ENCODE measurements at regions of chr4 and their contacts with region 1.

Region 1: DNA sequence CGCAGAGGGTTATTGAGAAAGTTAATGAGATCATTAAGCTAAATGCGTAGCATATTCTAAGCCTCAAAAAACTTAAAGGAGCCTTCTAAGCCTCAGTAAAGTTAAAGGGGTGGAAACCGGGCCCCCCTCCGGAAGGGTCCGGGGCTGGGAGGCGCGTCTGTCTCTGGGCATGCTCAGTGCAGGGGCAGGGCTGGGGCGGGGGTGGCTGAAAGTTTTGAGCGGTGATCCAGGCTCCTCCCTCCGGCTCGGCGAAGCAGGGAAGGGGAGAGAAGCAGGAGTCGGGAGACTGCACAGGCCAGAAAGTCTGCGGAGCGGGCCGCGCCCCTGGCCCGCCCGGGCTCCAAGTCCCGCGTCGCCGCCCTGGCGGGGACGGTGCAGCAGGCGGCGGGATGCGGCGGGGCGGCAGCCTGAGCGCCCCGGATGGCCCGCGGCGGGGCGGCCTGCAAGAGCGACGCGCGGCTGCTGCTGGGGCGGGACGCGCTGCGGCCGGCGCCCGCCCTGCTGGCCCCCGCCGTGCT is at the start of gene EVC:
- DNase-seq: peak; percentile 92 to 95
- ATAC-seq: peak; percentile 87
- H3K4me3 ChIP-seq: peak within 1 kb of the TSS; percentile 63 to 88
- H3K27ac ChIP-seq: peak within 1 kb of the TSS; percentile 63 to 82
- H3K4me1 ChIP-seq: peaks cover 4 to 6% of the 10 kb centered on the region in 2 donors
- H3K27me3 ChIP-seq: no peaks in the 10 kb centered on the region
- total RNA-seq, gene EVC: 33.3 to 58.2 TPM

Region 2: GRCh38 chr4:5101571-5101970 is 609.4 kb before region 1 on chr4:
- intact Hi-C with region 1: no loop called
- DNase-seq: no peak
- ATAC-seq: no peak
- H3K4me3 ChIP-seq: no peak overlapping the region
- H3K27ac ChIP-seq: no peak overlapping the region
- H3K4me1 ChIP-seq: no peaks in the 10 kb centered on the region
- H3K27me3 ChIP-seq: no peaks in the 10 kb centered on the region

Region 3: DNA sequence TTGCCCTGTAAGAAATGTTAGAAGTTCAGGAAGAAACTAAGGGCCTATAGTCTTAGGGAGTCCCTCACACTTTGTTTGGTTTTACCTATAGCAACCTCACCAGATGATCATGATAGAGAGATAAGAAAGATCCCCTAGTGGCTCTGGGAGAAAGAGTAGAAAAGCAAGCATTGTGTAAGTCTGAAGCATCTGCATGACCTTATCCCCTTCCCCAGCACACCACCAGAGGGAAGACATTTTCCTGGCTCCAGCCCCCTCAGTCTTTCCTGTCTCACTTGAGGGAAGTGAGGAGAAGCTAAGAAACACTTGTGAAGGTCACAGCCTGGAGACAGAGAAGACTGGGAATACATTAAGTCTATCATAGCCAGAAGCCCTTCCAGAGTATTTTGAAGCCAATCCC is 156.6 kb before region 1 on chr4:
- intact Hi-C with region 1: no loop called
- DNase-seq: no peak
- ATAC-seq: no peak
- H3K4me3 ChIP-seq: no peak overlapping the region
- H3K27ac ChIP-seq: no peak overlapping the region
- H3K4me1 ChIP-seq: no peaks in the 10 kb centered on the region
- H3K27me3 ChIP-seq: no peaks in the 10 kb centered on the region

Region 4: DNA sequence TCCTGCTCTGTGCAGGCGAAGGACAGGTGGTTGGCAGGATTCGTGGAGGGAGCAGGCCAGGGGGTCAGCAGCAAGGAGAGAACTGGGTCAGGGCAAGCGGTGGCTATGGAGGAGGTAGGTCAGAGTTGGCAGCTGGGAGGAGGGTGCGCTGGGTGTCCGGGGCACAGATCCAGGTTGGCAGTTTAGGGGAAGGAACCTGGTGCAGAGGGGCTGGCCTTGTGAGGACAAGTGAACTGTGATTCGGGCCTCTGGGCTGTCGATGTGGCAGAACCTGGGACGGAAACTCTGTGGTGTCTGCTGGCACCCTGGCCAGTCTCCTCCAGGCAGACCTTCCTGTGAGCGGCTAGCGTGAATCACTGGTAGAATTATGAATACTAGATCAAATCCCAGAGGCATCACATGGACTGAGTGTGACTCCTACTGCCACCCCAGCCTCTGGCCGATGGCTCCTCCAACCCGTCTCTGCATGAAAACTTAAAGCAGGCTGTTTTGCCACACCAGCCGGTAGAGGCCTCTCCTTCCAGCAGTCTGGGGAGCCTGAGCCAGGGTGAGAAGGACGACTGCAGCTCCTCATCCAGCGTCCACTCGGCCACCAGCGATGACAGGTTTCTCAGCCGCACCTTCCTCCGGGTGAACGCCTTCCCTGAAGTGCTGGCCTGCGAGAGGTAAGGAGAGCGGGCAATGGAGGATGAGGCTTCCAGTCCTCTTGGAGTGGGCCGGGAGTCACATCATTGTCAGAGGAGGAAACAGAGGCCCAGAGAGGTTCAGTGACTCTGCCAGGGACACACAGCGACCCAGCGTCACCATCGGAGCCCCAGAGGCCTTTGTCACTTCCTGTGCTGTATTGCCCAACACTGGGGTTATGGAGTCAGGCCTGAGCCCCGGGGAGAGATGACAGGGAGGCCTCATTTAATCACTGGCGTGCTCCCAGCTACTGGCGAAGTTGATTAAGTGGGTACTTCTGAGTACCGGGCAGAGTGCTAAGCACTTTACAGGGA is 20.3 kb after region 1 on chr4:
- intact Hi-C with region 1: loop called in 1 of 2 experiments (anchors 1 kb)
- DNase-seq: peak; percentile 75 to 85
- ATAC-seq: peak; percentile 49
- H3K4me3 ChIP-seq: no peak overlapping the region
- H3K27ac ChIP-seq: peak overlapping the region; percentile 54 to 85
- H3K4me1 ChIP-seq: peaks cover 2 to 7% of the 10 kb centered on the region in 2 donors
- H3K27me3 ChIP-seq: no peaks in the 10 kb centered on the region

Region 5: DNA sequence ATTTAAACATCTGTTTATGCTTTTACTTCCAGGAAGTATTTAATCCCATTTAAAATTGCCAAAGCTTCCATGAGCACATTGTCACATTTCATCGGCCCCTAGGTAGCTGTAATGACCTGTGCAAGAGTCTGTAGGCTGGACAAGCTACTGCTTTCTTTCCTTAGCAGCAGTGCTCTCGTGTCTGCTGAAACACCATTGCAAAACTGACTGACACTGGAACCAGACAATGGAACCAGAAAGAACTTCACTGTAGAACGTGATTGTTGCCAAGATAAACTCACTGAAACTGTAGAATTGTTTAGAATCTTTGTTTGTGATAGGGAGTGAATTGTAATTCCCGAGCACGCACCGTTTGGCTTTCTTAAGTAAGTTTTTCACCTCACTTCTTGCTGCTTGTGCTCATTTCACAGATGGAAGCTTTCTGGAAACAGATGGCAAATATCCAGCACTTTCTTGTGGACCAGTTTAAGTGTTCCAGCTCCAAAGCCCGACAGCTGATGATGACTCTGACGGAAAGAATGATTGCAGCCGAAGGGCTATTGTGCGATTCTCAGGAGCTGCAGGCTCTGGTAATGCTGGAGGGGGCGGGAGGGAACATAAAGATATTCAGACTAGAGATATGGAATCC is 36.8 kb after region 1 on chr4:
- intact Hi-C with region 1: loop called in 1 of 2 experiments (anchors 5 kb)
- DNase-seq: peak in 1 of 2 donors; percentile 66
- ATAC-seq: peak; percentile 73
- H3K4me3 ChIP-seq: no peak overlapping the region
- H3K27ac ChIP-seq: peak overlapping the region; percentile 79 to 88
- H3K4me1 ChIP-seq: no peaks in the 10 kb centered on the region
- H3K27me3 ChIP-seq: no peaks in the 10 kb centered on the region

Region 6: DNA sequence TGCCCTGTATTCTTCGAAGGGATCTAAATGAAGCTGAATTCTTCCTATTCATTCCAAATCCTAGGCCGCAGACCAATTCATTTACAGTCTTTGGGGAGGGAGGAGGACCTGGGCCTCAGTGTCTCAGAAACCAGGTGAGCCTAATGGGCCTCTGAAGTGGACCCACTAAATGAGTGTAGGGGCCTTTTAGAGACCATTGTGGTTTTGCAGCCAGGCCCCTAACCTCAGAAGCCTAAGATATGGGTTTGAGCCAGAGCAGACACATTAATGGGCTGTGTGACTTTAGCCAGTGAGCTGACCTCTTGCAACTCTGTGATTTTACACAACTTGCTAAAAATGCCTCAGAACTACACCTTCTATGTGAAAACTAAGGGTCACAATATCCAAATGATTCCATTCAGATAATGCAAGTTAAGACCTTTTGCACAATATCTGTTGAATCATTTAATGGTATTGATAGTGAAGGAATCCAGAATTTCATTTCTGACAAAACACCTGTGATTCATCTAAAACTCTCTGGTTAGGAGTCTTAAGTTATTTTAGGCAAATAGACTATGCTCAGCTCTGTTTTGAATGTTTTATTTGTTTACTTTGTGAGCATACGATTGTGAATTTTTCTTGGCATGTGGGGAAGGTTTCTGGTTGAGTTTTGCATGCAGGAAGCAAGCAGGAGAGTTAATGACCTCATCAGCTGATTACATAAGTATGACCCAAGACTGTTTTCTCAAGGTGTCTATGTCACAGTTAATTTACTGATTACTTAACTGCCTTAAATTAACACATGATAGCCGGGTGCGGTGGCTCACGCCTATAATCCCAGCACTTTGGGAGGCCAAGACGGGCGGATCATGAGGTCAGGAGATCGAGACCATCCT is 75.0 kb after region 1 on chr4:
- intact Hi-C with region 1: loop called (anchors 5 kb)
- DNase-seq: no peak
- ATAC-seq: no peak
- H3K4me3 ChIP-seq: no peak overlapping the region
- H3K27ac ChIP-seq: peak overlapping the region in 1 of 2 donors; percentile 58
- H3K4me1 ChIP-seq: no peaks in the 10 kb centered on the region
- H3K27me3 ChIP-seq: no peaks in the 10 kb centered on the region

Region 7: GRCh38 chr4:6873792-6874461 is 1162.9 kb after region 1 on chr4:
- intact Hi-C with region 1: no loop called
- DNase-seq: peak; percentile 82 to 90
- ATAC-seq: peak; percentile 77
- H3K4me3 ChIP-seq: no peak overlapping the region
- H3K27ac ChIP-seq: no peak overlapping the region
- H3K4me1 ChIP-seq: no peaks in the 10 kb centered on the region
- H3K27me3 ChIP-seq: no peaks in the 10 kb centered on the region